Right cardiac atrium (tissue), 5 donors: ENCODE measurements at regions of chr15 and their contacts with region 1.

Region 1: GRCh38 chr15:88440021-88440420 is 27.2 kb downstream of the MRPL46 start:
- DNase-seq: no peak
- ATAC-seq: no peak
- H3K4me3 ChIP-seq: no peak overlapping the region
- H3K27ac ChIP-seq: no peak overlapping the region
- H3K4me1 ChIP-seq: no peaks in the 10 kb centered on the region
- H3K27me3 ChIP-seq: no peaks in the 10 kb centered on the region

Region 2: DNA sequence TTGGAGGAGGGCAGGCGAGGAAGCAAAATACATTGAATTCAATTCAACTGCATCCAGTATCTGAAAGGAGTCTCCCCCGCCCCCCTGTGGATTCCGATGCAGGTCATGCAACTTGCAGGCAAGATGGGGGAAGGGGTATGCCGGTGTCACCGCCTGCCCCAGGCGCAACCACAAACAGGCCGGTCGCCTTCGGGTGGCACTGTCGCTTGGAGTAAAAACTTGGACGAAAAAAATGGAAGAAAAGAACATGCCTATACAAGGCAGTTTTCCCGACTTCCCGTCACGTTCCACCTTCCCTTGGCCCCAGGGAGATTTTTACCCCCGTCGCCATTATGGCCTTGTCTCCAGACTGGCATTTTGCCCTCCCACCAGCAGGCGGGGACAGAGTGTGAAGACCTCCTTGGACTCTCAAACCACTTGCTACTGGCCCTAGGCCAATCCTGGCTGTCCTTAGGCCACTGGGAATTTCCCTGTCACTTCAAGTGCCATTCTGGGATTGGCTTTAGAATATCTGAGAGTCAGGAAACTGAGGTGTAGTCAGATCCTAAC is 181.9 kb before region 1 on chr15:
- intact Hi-C with region 1: loop called in 1 of 4 experiments (anchors 10 kb)
- DNase-seq: peak; percentile 31 to 69 (median 48)
- ATAC-seq: peak in 1 of 2 donors; percentile 10
- H3K4me3 ChIP-seq: peak overlapping the region; percentile 55
- H3K27ac ChIP-seq: no peak overlapping the region
- H3K4me1 ChIP-seq: peaks cover 3% of the 10 kb centered on the region
- H3K27me3 ChIP-seq: no peaks in the 10 kb centered on the region